B cell (primary cell): ENCODE measurements at regions of chr10 and their contacts with region 1.

Region 1: GRCh38 chr10:97072851-97073665 is 112.7 kb downstream of the SLIT1 start:
- DNase-seq: peak; percentile 78
- ATAC-seq: peak; percentile 74
- H3K4me3 ChIP-seq: no peak overlapping the region
- H3K4me3 Mint-ChIP-seq: no peak overlapping the region
- H3K27ac ChIP-seq: no peak overlapping the region
- H3K27ac Mint-ChIP-seq: no peak overlapping the region
- H3K4me1 ChIP-seq: no peaks in the 10 kb centered on the region
- H3K4me1 Mint-ChIP-seq: no peaks in the 10 kb centered on the region
- H3K27me3 ChIP-seq: peaks cover 0 to 28% (median 3%) of the 10 kb centered on the region in 4 experiments
- H3K27me3 Mint-ChIP-seq: peaks cover 40% of the 10 kb centered on the region
- CTCF ChIP-seq: peak; percentile 90

Region 2: GRCh38 chr10:97217299-97217698 is 144.2 kb after region 1 on chr10:
- CTCF ChIA-PET with region 1: interaction called, 412 read pairs
- POLR2A ChIA-PET with region 1: no interaction called
- intact Hi-C with region 1: no loop called
- DNase-seq: no peak
- ATAC-seq: no peak
- H3K4me3 ChIP-seq: no peak overlapping the region
- H3K4me3 Mint-ChIP-seq: no peak overlapping the region
- H3K27ac ChIP-seq: no peak overlapping the region
- H3K27ac Mint-ChIP-seq: no peak overlapping the region
- H3K4me1 ChIP-seq: no peaks in the 10 kb centered on the region
- H3K4me1 Mint-ChIP-seq: no peaks in the 10 kb centered on the region
- H3K27me3 ChIP-seq: no peaks in the 10 kb centered on the region
- H3K27me3 Mint-ChIP-seq: no peaks in the 10 kb centered on the region
- CTCF ChIP-seq: no peak

Region 3: DNA sequence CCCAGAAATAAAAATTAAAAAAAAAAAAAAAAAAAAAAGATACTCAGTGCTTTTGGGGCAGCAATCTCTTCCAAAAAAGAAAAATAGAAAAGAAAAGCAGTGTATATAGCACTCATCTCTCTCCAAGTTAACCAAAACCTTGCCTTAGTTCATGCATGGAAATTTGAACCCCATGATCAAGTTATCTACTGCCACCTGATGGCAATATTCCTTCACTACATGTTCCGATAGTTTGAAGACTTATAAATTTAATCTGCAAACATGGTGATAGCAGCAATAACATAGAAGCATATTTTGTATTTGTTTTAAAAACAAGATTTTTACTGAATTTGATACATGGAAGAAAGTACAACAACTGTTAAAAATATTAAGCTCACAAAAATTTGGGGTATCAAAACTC is 161.3 kb after region 1 on chr10:
- CTCF ChIA-PET with region 1: interaction called, 42 read pairs
- POLR2A ChIA-PET with region 1: no interaction called
- intact Hi-C with region 1: loop called (anchors 1 kb)
- DNase-seq: peak; percentile 29
- ATAC-seq: no peak
- H3K4me3 ChIP-seq: no peak overlapping the region
- H3K4me3 Mint-ChIP-seq: no peak overlapping the region
- H3K27ac ChIP-seq: no peak overlapping the region
- H3K27ac Mint-ChIP-seq: no peak overlapping the region
- H3K4me1 ChIP-seq: peaks cover 0 to 4% of the 10 kb centered on the region in 2 donors
- H3K4me1 Mint-ChIP-seq: peaks cover 5% of the 10 kb centered on the region
- H3K27me3 ChIP-seq: no peaks in the 10 kb centered on the region
- H3K27me3 Mint-ChIP-seq: no peaks in the 10 kb centered on the region
- CTCF ChIP-seq: peak; percentile 67